B cell (primary cell): ENCODE measurements at regions of chr20 and their contacts with region 1.

Region 1: DNA sequence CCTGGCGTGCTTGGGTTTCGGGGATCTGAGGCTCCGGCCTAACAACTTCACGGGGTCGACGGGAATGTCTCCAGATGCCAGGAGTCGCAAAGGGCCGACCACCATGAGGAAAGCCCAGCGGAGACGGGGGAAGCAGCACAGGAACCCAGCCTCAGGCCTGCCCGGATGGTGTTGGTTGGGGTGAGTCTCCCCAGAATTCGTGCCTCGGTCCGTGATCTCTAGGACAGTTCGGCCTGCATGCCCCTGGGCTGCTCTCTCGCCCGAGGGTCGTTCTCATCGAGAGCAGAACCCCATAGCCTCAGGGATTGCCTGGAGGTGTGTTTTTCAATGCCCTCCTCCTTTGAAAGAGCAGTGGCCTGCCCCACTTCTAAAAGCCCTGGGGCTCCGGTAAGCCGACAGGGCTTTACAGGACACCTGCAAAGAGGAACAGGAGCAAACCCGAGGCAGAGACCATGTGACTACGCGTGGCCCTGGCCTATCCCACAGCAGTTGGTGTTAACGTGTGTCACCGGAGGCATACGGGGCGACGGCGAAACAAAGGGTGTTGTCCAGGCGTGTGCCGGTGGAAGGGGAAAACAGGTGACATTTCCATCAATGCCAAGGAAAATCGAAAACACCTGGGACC is 973.1 kb upstream of the DEFB115 start:
- DNase-seq: no peak
- ATAC-seq: no peak
- H3K4me3 ChIP-seq: peak overlapping the region in 1 of 5 experiments; percentile 26
- H3K4me3 Mint-ChIP-seq: peak overlapping the region; percentile 87
- H3K27ac ChIP-seq: no peak overlapping the region
- H3K27ac Mint-ChIP-seq: peak overlapping the region; percentile 76
- H3K4me1 ChIP-seq: peaks cover 0 to 22% of the 10 kb centered on the region in 2 donors
- H3K4me1 Mint-ChIP-seq: peaks cover 13% of the 10 kb centered on the region
- H3K27me3 ChIP-seq: no peaks in the 10 kb centered on the region
- H3K27me3 Mint-ChIP-seq: no peaks in the 10 kb centered on the region
- CTCF ChIP-seq: no peak

Region 2: GRCh38 chr20:30376767-30377666 is 92.6 kb after region 1 on chr20:
- CTCF ChIA-PET with region 1: no interaction called
- POLR2A ChIA-PET with region 1: no interaction called
- intact Hi-C with region 1: loop called (anchors 2 kb)
- DNase-seq: peak; percentile 93
- ATAC-seq: peak; percentile 92
- H3K4me3 ChIP-seq: peak overlapping the region; percentile 44 to 76 (median 67)
- H3K4me3 Mint-ChIP-seq: peak overlapping the region; percentile 98
- H3K27ac ChIP-seq: peak overlapping the region; percentile 56 to 72
- H3K27ac Mint-ChIP-seq: peak overlapping the region; percentile 97
- H3K4me1 ChIP-seq: peaks cover 0 to 4% of the 10 kb centered on the region in 2 donors
- H3K4me1 Mint-ChIP-seq: peaks cover 25% of the 10 kb centered on the region
- H3K27me3 ChIP-seq: no peaks in the 10 kb centered on the region
- H3K27me3 Mint-ChIP-seq: no peaks in the 10 kb centered on the region
- CTCF ChIP-seq: peak; percentile 74

Region 3: GRCh38 chr20:30922129-30922528 is 637.7 kb after region 1 on chr20:
- CTCF ChIA-PET with region 1: no interaction called
- POLR2A ChIA-PET with region 1: no interaction called
- intact Hi-C with region 1: no loop called
- DNase-seq: no peak
- ATAC-seq: no peak
- H3K4me3 ChIP-seq: no peak overlapping the region
- H3K4me3 Mint-ChIP-seq: no peak overlapping the region
- H3K27ac ChIP-seq: no peak overlapping the region
- H3K27ac Mint-ChIP-seq: no peak overlapping the region
- H3K4me1 ChIP-seq: no peaks in the 10 kb centered on the region
- H3K4me1 Mint-ChIP-seq: no peaks in the 10 kb centered on the region
- H3K27me3 ChIP-seq: no peaks in the 10 kb centered on the region
- H3K27me3 Mint-ChIP-seq: no peaks in the 10 kb centered on the region
- CTCF ChIP-seq: no peak